ENCODE measurements at regions of chr1 and their contacts with region 1.

Region 1: DNA sequence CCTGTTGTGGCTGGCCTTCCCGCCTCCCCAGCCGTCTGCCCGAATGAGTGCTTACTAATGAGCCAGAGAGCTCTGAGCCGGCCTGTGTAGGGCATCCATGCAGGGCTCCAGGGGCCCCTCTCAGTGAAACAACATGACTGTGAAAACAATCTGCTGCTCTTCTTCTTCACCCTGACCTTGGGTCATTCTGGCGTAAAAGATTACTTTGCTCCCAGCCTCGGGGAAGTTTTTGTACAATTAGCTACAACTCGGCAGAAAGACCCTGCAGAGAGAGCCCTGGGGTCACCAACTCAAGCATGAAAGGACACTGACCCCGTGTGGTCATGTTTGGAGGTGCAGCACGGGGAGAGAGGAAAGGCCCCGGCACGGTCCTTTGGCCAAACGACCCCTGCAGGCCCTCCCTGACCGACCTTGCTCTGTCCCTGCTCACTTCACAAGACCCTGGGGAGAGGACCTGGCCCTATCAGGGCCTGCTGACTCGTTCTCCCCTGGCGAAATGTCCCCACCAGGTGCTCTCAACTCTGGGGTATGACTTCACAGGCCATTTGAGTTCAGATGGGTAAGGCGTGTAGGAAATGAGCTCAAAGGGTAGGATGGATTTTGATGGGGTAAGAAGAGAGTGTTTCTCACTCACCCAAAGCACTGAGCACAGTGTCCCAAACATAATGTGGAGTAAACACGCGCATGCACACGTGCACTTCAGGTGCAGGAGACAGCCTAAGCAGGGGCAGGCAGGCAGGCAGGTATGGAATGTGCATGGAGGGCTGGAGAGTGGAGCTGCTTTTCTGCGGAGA is 22.9 kb upstream of the FAM20B start:
- DNase-seq: peak; percentile 97
- ATAC-seq: peak; percentile 97
- H3K4me3 Mint-ChIP-seq: peak overlapping the region; percentile 51
- H3K27ac Mint-ChIP-seq: peak overlapping the region; percentile 71; the same call in 1 of the 2 replicates
- H3K4me1 Mint-ChIP-seq: peaks cover 10% of the 10 kb centered on the region
- H3K27me3 Mint-ChIP-seq: no peaks in the 10 kb centered on the region; the same call in 1 of the 2 replicates
- CTCF ChIP-seq: peak; percentile 94

Region 2: DNA sequence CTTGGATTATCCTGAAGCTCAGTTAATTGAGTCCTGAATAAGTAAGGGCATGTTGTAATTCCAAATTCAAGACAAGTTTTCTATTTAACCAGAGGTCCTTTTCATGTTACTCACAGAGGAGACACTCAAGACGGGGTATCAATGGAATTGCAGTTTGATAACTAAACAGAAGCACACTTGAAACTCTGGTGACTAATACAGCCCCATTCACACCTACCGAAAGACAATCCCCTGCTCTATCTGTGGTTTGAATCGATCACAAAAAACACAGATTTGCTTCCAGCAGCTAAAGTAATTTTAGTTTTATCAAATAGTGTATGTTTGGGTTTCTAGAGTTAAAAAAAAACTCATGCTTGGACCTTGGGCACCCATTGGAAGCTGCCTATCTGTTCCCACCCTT is 429.4 kb before region 1 on chr1:
- CTCF ChIA-PET with region 1: interaction called, 12 read pairs
- POLR2A ChIA-PET with region 1: no interaction called
- DNase-seq: no peak
- ATAC-seq: no peak
- H3K4me3 Mint-ChIP-seq: no peak overlapping the region
- H3K27ac Mint-ChIP-seq: no peak overlapping the region
- H3K4me1 Mint-ChIP-seq: peaks cover 29% of the 10 kb centered on the region
- H3K27me3 Mint-ChIP-seq: no peaks in the 10 kb centered on the region
- CTCF ChIP-seq: no peak

Region 3: GRCh38 chr1:178768423-178768822 is 234.3 kb before region 1 on chr1:
- CTCF ChIA-PET with region 1: interaction called, 20 read pairs
- POLR2A ChIA-PET with region 1: no interaction called
- DNase-seq: no peak
- ATAC-seq: peak; percentile 83
- H3K4me3 Mint-ChIP-seq: no peak overlapping the region
- H3K27ac Mint-ChIP-seq: no peak overlapping the region; the same call in 1 of the 2 replicates
- H3K4me1 Mint-ChIP-seq: peaks cover 13% of the 10 kb centered on the region
- H3K27me3 Mint-ChIP-seq: no peaks in the 10 kb centered on the region; the same call in 1 of the 2 replicates
- CTCF ChIP-seq: peak; percentile 93

Region 4: GRCh38 chr1:178931858-178932551 is 70.7 kb before region 1 on chr1:
- CTCF ChIA-PET with region 1: interaction called, 18 read pairs
- POLR2A ChIA-PET with region 1: no interaction called
- DNase-seq: no peak
- ATAC-seq: peak; percentile 37
- H3K4me3 Mint-ChIP-seq: no peak overlapping the region
- H3K27ac Mint-ChIP-seq: no peak overlapping the region
- H3K4me1 Mint-ChIP-seq: peaks cover 43% of the 10 kb centered on the region
- H3K27me3 Mint-ChIP-seq: no peaks in the 10 kb centered on the region
- CTCF ChIP-seq: no peak

Region 5: DNA sequence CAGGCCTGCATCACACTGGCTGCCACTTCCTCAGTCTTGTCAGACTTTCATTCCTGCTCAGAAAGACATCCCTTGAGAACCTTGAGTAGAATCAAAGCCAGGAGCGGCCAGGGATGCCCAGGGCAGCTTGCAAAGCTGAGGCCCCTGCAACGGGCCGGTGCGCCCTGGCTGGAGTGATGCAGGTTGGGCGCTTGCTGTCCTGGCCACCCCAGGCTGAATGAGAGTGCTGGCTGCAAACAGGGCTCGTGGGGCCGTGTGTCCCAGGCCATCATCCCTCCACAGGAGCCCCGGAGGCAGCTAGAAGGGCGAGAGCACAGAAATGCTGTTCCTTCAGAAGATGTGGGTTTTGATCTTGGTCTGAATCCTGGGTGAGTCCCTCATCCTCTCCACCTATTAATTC is 44.3 kb before region 1 on chr1:
- CTCF ChIA-PET with region 1: interaction called, 14 read pairs
- POLR2A ChIA-PET with region 1: no interaction called
- DNase-seq: no peak
- ATAC-seq: no peak
- H3K4me3 Mint-ChIP-seq: no peak overlapping the region
- H3K27ac Mint-ChIP-seq: no peak overlapping the region
- H3K4me1 Mint-ChIP-seq: no peaks in the 10 kb centered on the region
- H3K27me3 Mint-ChIP-seq: no peaks in the 10 kb centered on the region
- CTCF ChIP-seq: no peak

Measured in WTC11 (cell line).